Upper lobe of right lung (tissue), 1 donor: ENCODE measurements at regions of chr18 and their contacts with region 1.

Region 1: GRCh38 chr18:2932247-2933181 is 80.4 kb downstream of the LPIN2 start:
- DNase-seq: no peak
- ATAC-seq: peak; percentile 74
- H3K4me3 ChIP-seq: no peak overlapping the region
- H3K27ac ChIP-seq: no peak overlapping the region
- H3K4me1 ChIP-seq: no peaks in the 10 kb centered on the region
- H3K27me3 ChIP-seq: no peaks in the 10 kb centered on the region
- CTCF ChIP-seq: peak; percentile 73

Region 2: GRCh38 chr18:2878656-2879330 is 53.7 kb before region 1 on chr18:
- intact Hi-C with region 1: no loop called
- DNase-seq: no peak
- ATAC-seq: no peak
- H3K4me3 ChIP-seq: no peak overlapping the region
- H3K27ac ChIP-seq: no peak overlapping the region
- H3K4me1 ChIP-seq: peaks cover 15% of the 10 kb centered on the region
- H3K27me3 ChIP-seq: no peaks in the 10 kb centered on the region
- CTCF ChIP-seq: no peak

Region 3: GRCh38 chr18:2994603-2995432 is 62.3 kb after region 1 on chr18:
- intact Hi-C with region 1: no loop called
- DNase-seq: no peak
- ATAC-seq: peak; percentile 73
- H3K4me3 ChIP-seq: no peak overlapping the region
- H3K27ac ChIP-seq: no peak overlapping the region
- H3K4me1 ChIP-seq: peaks cover 32% of the 10 kb centered on the region
- H3K27me3 ChIP-seq: no peaks in the 10 kb centered on the region
- CTCF ChIP-seq: peak; percentile 55

Region 4: DNA sequence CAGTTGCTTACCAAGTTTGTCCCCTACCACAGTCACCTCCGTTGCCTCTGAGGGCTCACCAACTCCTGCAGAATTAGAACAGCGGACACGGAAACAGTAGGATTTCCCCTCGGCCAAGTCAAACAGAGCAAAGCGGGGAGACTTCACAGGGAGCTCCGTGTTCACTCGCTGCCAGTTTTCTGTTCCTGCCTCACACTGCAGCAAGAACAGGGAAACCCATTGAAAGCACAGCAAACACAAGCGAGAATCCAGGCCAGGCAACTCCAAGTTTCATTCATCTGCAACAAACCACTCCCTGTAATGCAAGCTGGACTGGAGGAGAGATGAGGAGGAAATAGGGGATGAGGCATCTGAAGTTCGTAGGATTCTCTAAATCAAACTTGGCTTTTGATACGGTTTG is 203.0 kb after region 1 on chr18:
- intact Hi-C with region 1: loop called (anchors 10 kb)
- DNase-seq: no peak
- ATAC-seq: no peak
- H3K4me3 ChIP-seq: no peak overlapping the region
- H3K27ac ChIP-seq: no peak overlapping the region
- H3K4me1 ChIP-seq: no peaks in the 10 kb centered on the region
- H3K27me3 ChIP-seq: no peaks in the 10 kb centered on the region
- CTCF ChIP-seq: no peak

Region 5: GRCh38 chr18:3245853-3246634 is 313.5 kb after region 1 on chr18:
- intact Hi-C with region 1: loop called (anchors 5 kb)
- DNase-seq: peak; percentile 94
- ATAC-seq: peak; percentile 86
- H3K4me3 ChIP-seq: peak overlapping the region; percentile 81
- H3K27ac ChIP-seq: peak overlapping the region; percentile 97
- H3K4me1 ChIP-seq: peaks cover 27% of the 10 kb centered on the region
- H3K27me3 ChIP-seq: no peaks in the 10 kb centered on the region
- CTCF ChIP-seq: peak; percentile 95